ENCODE measurements at regions of chrX and their contacts with region 1.

Region 1: DNA sequence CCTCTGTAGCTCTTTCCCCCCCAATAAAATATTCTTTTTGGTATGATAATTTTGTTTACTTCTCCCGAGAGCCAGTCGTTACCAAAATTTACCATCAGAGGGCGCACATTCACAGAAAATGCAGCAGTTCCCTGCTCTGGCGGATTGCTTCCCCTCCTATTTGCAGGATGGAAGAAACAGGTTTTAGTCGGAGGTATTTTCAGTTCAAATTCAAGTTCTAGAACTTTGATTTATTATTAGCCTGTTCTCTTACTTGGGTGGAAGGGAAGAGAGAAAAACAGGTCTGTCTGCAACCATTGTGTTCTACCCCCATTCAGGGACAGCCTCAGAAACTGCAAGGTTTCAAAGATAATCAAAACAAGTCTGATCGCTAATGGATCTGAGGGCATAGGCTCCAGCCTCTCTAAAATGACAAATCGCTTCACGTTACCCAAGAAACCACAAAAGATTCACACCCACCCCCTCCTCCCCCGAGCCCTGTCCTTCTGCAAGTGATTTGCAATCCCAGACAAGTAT is 263.8 kb upstream of the RPS6KA3 start:
- H3K4me3 Mint-ChIP-seq: no peak overlapping the region
- H3K27ac Mint-ChIP-seq: no peak overlapping the region
- H3K4me1 Mint-ChIP-seq: peaks cover 11% of the 10 kb centered on the region
- H3K27me3 Mint-ChIP-seq: peaks cover 22% of the 10 kb centered on the region

Region 2: DNA sequence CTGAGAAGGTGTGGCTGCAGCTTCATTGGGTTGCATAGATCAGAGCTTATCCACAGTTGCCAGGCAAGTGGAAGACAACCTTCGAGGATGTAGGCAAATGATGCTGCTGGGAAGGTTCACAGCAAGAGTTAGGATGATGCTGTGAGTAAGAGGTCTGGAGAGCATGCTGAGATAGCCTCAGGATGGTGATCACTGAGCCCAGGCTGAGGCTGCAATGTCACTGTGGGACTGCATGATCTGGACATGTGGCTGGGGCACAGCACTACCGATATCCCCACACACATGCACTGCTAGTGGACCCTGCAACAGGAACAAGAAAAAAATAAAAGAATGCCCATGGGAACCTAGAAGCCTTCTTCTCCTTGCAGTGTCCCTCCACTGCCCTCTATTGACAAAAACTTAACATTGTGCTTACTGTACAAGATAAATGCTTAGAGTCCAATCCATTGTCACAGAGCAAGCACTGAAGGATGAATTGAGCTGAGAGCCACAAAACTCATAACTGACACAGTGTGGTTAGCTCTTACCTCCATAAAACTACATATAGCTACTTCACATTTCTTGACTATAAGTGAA is 949.3 kb after region 1 on chrX:
- intact Hi-C with region 1: loop called (anchors 1 kb)
- H3K4me3 Mint-ChIP-seq: no peak overlapping the region
- H3K27ac Mint-ChIP-seq: no peak overlapping the region
- H3K4me1 Mint-ChIP-seq: no peaks in the 10 kb centered on the region
- H3K27me3 Mint-ChIP-seq: no peaks in the 10 kb centered on the region

Region 3: GRCh38 chrX:21745756-21746155 is 1215.3 kb after region 1 on chrX:
- intact Hi-C with region 1: loop called (anchors 2 kb)
- H3K4me3 Mint-ChIP-seq: no peak overlapping the region
- H3K27ac Mint-ChIP-seq: no peak overlapping the region
- H3K4me1 Mint-ChIP-seq: no peaks in the 10 kb centered on the region
- H3K27me3 Mint-ChIP-seq: peaks cover 9% of the 10 kb centered on the region